Esophagus muscularis mucosa (tissue), 4 donors: ENCODE measurements at regions of chr17 and their contacts with region 1.

Region 1: DNA sequence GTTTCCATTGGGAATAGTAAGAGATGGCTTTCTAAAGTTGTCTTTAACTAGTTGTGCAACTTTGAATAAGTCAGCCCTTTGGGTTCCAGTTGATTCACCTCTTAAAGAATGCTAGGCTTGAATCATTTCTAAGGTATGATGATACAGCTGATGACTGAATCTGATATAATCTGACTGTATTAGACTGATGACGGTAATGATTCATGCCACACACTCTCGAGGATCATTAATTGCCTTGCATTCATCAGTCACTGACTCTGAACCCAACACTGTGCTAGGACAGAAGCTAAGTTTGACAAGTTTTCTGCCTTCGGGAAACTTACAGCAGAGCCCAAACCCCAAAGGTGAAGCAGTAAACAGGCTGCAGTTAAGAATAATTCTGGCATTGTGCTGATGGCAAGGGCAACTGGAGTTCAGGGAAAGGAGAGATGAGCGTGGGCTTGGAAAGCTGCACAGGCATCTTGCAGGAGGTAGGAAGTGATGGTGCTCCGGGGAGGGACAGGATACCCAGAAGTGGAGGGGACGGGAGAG is 25.8 kb downstream of the ASIC2 start:
- DNase-seq: no peak
- H3K4me3 ChIP-seq: no peak overlapping the region
- H3K27ac ChIP-seq: no peak overlapping the region
- H3K4me1 ChIP-seq: no peaks in the 10 kb centered on the region
- H3K27me3 ChIP-seq: peaks cover 0 to 41% (median 0%) of the 10 kb centered on the region in 4 donors
- CTCF ChIP-seq: no peak
- EP300 ChIP-seq: no peak
- POLR2A ChIP-seq: no peak

Region 2: DNA sequence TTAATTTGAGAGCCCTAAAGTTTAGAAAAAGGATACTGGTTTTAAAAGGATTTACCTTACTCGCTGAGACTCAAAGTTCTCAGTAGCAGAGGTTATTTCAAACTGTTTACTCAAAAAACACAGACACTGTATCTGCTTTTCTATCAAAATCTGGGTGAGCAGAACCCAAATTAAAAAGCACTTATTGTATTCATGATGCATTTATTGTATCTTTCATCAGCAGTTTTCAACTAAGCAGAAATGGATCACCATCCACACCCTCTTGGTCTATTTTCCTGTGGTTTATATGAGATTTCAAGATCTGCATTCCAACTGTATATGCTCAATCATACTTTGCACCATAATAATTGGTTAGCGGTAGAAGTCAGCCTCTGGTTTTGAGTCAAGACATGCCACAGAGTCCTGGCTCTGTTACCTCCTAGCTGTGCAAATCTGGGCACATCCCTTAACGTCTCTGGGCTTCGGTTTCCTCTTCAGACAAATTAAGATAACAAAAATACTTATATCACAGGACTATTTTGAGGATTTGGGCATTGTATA is 83.8 kb before region 1 on chr17:
- intact Hi-C with region 1: no loop called
- DNase-seq: no peak
- H3K4me3 ChIP-seq: no peak overlapping the region
- H3K27ac ChIP-seq: no peak overlapping the region
- H3K4me1 ChIP-seq: no peaks in the 10 kb centered on the region
- H3K27me3 ChIP-seq: peaks cover 0 to 29% (median 3%) of the 10 kb centered on the region in 4 donors
- CTCF ChIP-seq: no peak
- EP300 ChIP-seq: no peak
- POLR2A ChIP-seq: no peak

Region 3: DNA sequence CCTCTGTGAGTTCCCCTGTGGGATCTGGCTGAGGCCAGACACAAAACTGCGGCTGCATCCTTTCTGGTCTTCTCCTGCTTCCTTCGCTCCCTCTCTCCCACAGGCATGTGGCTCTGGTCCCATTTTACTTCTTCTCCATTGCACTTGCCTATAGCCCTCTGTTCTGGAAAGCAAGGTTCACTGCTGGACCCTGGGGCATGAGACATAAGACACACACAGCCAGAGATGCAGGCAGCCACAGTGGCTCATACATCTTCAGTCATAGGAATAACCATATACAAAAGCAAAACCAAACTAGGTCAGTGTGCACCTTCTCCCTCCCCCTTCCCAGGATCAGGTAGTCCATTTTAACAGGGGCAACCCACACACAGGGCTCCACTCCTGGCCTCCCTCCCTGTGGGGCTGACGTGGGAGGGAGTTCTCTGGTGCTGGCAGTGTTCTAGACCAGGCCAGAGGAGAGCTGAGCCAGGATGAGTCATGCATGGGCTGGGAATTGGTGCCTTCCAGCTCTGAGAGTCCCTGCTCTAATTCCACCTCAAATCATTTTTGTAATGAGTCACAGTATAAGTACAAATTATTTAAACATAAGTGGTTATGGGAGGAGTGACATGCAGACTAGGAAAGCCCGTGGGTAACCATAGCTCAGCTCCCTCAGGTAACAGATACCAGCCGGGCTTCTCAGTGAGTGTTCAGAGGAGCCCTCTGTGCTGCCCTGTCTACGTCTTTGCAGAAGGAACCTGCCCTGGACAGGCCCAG is 32.2 kb before region 1 on chr17:
- intact Hi-C with region 1: loop called (anchors 5 kb)
- DNase-seq: no peak
- H3K4me3 ChIP-seq: no peak overlapping the region
- H3K27ac ChIP-seq: peak overlapping the region in 3 of 4 donors; percentile 6 to 37 (median 13)
- H3K4me1 ChIP-seq: peaks cover 0 to 26% (median 22%) of the 10 kb centered on the region in 4 donors
- H3K27me3 ChIP-seq: no peaks in the 10 kb centered on the region
- CTCF ChIP-seq: no peak
- EP300 ChIP-seq: no peak
- POLR2A ChIP-seq: no peak